Activated CD8-positive, alpha-beta T cell treated with anti-CD3 and anti-CD28 coated beads for 36 hours (primary cell): ENCODE measurements at regions of chr11 and their contacts with region 1.

Region 1: DNA sequence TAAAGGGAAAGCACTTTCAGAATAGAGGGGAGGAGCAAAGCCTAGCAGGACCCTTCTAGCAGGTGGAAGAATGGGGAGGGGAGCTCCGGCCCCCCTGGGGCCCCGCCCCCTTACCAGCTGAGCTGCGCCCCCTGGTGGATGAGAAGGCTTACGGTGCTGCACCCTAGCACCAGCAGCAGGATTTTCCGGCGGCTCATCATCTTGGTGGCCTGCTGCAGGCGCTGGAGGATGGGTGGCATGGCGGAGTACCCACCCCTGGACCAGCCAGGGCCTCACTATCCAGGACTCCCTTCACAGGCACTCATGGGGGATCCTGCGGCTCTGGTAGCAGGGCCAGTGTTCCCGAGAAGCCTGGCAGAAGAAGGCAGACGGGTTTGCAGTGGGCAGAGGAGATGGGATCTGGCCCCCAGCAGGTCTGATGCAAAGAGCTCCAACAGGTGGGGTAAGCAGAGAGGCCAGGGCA is 3.8 kb downstream of the GAL3ST3 start:
- DNase-seq: peak; percentile 88
- ATAC-seq: peak; percentile 93
- H3K4me3 Mint-ChIP-seq: peak overlapping the region; percentile 38
- H3K27ac Mint-ChIP-seq: peak overlapping the region; percentile 69
- H3K4me1 Mint-ChIP-seq: peaks cover 20% of the 10 kb centered on the region
- H3K27me3 Mint-ChIP-seq: peaks cover 7% of the 10 kb centered on the region
- CTCF ChIP-seq: peak; percentile 98

Region 2: GRCh38 chr11:66011239-66011784 is 33.9 kb before region 1 on chr11:
- CTCF ChIA-PET with region 1: interaction called, 38 read pairs
- POLR2A ChIA-PET with region 1: interaction called, 4 read pairs
- intact Hi-C with region 1: no loop called
- DNase-seq: no peak
- ATAC-seq: no peak
- H3K4me3 Mint-ChIP-seq: no peak overlapping the region
- H3K27ac Mint-ChIP-seq: no peak overlapping the region
- H3K4me1 Mint-ChIP-seq: peaks cover 2% of the 10 kb centered on the region
- H3K27me3 Mint-ChIP-seq: peaks cover 17% of the 10 kb centered on the region
- CTCF ChIP-seq: no peak

Region 3: GRCh38 chr11:66059966-66060680 is 14.9 kb after region 1 on chr11:
- CTCF ChIA-PET with region 1: interaction called, 133 read pairs
- POLR2A ChIA-PET with region 1: interaction called, 4 read pairs
- intact Hi-C with region 1: no loop called
- DNase-seq: no peak
- ATAC-seq: no peak
- H3K4me3 Mint-ChIP-seq: no peak overlapping the region
- H3K27ac Mint-ChIP-seq: peak overlapping the region; percentile 89
- H3K4me1 Mint-ChIP-seq: peaks cover 42% of the 10 kb centered on the region
- H3K27me3 Mint-ChIP-seq: no peaks in the 10 kb centered on the region
- CTCF ChIP-seq: no peak

Region 4: GRCh38 chr11:66258473-66258893 is 213.3 kb after region 1 on chr11:
- CTCF ChIA-PET with region 1: no interaction called
- POLR2A ChIA-PET with region 1: no interaction called
- intact Hi-C with region 1: no loop called
- DNase-seq: no peak
- ATAC-seq: no peak
- H3K4me3 Mint-ChIP-seq: peak overlapping the region; percentile 95
- H3K27ac Mint-ChIP-seq: peak overlapping the region; percentile 82
- H3K4me1 Mint-ChIP-seq: peaks cover 24% of the 10 kb centered on the region
- H3K27me3 Mint-ChIP-seq: no peaks in the 10 kb centered on the region
- CTCF ChIP-seq: peak; percentile 29